ENCODE measurements at regions of chr11 and their contacts with region 1.

Region 1: GRCh38 chr11:86592659-86593451 is 79.6 kb downstream of the ME3 start:
- DNase-seq: peak; percentile 98
- H3K4me3 Mint-ChIP-seq: no peak overlapping the region
- H3K27ac Mint-ChIP-seq: peak overlapping the region; percentile 86
- H3K4me1 Mint-ChIP-seq: peaks cover 70% of the 10 kb centered on the region
- H3K27me3 Mint-ChIP-seq: no peaks in the 10 kb centered on the region

Region 2: DNA sequence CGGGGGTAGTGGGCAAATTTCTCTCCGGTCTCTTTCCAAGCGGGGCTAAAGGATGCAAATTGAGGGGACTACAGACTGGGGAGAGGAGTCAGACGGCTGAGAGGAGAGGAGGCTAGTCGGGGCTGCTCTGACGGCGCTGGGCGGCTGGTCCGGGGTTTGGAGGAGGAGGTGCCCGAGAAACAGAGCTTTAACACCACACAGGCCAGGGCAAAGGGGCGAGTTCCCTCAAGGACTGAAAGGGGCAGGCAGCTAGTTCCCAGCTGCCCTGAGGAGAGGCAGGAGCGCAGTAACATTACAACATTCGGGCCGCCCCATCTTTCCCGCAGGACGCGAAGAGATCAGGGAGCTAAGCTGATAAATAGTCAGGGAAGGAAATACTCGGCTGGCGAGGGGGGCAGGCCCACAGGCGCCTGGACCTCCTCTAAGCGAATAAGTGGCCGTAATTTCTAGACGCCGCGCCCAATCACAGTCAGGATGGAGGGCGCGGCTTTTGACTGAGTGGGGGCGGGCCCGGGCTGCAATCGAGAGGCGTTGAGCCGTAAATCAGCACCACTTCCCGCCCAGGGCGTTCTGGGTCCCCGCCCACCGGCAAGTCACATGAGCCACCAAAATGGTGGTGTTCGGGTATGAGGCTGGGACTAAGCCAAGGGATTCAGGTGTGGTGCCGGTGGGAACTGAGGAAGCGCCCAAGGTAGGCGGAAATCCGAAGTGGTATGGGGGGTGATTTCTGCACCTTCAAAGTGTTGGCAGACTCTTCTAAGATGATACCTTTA is 964.7 kb before region 1 on chr11 and contains the start of gene TMEM126B:
- CTCF ChIA-PET with region 1: no interaction called
- intact Hi-C with region 1: loop called (anchors 2 kb)
- DNase-seq: peak; percentile 98
- H3K4me3 Mint-ChIP-seq: peak within 1 kb of the TSS; percentile 99
- H3K27ac Mint-ChIP-seq: peak within 1 kb of the TSS; percentile 96
- H3K4me1 Mint-ChIP-seq: peaks cover 33% of the 10 kb centered on the region
- H3K27me3 Mint-ChIP-seq: no peaks in the 10 kb centered on the region
- total RNA-seq, gene TMEM126B: 72.6 to 79.0 TPM

Region 3: GRCh38 chr11:85947431-85948272 is 645.2 kb before region 1 on chr11:
- CTCF ChIA-PET with region 1: no interaction called
- intact Hi-C with region 1: loop called (anchors 1 kb)
- DNase-seq: peak; percentile 62
- H3K4me3 Mint-ChIP-seq: peak overlapping the region; percentile 1
- H3K27ac Mint-ChIP-seq: peak overlapping the region; percentile 87
- H3K4me1 Mint-ChIP-seq: peaks cover 46% of the 10 kb centered on the region
- H3K27me3 Mint-ChIP-seq: no peaks in the 10 kb centered on the region

Region 4: DNA sequence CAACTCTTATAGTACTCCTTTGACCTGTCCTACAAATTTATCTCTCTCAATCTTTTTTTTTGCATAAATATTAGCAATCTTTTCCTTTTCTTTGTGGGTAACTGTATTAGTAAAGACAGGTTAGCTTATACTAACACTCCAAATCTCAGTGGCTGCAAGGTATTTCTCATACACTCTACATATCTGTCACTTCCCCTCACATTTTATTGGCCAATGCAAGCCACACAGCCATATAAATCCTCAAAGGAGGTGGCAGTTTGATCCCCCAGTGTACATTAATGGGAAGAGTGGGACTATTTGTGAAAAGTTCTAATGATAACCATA is 390.9 kb before region 1 on chr11:
- CTCF ChIA-PET with region 1: no interaction called
- intact Hi-C with region 1: loop called (anchors 1 kb)
- DNase-seq: peak; percentile 42
- H3K4me3 Mint-ChIP-seq: no peak overlapping the region
- H3K27ac Mint-ChIP-seq: no peak overlapping the region
- H3K4me1 Mint-ChIP-seq: no peaks in the 10 kb centered on the region
- H3K27me3 Mint-ChIP-seq: no peaks in the 10 kb centered on the region

Region 5: GRCh38 chr11:86456052-86456939 is 136.6 kb before region 1 on chr11:
- CTCF ChIA-PET with region 1: interaction called, 4 read pairs
- intact Hi-C with region 1: loop called (anchors 1 kb)
- DNase-seq: peak; percentile 95
- H3K4me3 Mint-ChIP-seq: no peak overlapping the region
- H3K27ac Mint-ChIP-seq: no peak overlapping the region
- H3K4me1 Mint-ChIP-seq: peaks cover 8% of the 10 kb centered on the region
- H3K27me3 Mint-ChIP-seq: no peaks in the 10 kb centered on the region

Region 6: DNA sequence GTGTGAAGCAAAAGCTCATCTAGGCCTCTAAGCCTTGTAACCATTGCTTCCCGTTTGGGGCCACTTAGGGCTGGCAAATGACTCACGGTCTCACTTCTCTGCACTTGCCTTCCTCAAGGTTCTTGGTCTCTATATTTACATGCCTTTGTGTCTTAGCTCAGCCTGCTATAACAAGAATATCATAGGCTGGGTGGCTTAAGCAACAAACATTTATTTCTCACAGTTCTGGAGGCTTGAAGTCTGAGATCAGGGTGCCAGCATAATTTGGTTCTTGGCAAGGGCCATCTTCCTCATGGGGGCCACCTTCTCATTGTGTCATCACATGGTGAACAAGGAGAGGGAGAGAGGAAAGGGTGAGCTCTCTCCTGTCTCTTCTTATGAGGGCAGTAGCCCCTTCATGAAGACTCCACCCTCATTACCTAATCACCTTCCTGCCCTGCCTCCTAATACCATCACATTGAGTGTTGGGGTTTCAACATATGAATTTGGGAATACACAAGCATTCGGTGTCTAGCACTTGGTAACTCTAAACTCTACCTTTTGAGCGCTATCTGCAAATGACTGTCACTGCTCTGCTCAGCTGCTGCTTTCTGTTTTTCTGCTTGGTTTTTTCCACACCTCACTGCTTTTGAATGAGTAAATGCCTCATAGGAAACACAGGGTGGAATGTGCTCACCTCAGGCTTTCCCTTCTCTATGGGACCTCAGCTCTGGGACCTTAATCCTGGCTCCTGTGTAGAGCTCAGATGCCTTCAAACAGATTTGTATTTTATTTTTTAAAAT is 95.7 kb after region 1 on chr11:
- CTCF ChIA-PET with region 1: interaction called, 4 read pairs
- intact Hi-C with region 1: loop called (anchors 1 kb)
- DNase-seq: peak; percentile 70
- H3K4me3 Mint-ChIP-seq: no peak overlapping the region
- H3K27ac Mint-ChIP-seq: peak overlapping the region; percentile 90
- H3K4me1 Mint-ChIP-seq: peaks cover 27% of the 10 kb centered on the region
- H3K27me3 Mint-ChIP-seq: peaks cover 2% of the 10 kb centered on the region

Region 7: DNA sequence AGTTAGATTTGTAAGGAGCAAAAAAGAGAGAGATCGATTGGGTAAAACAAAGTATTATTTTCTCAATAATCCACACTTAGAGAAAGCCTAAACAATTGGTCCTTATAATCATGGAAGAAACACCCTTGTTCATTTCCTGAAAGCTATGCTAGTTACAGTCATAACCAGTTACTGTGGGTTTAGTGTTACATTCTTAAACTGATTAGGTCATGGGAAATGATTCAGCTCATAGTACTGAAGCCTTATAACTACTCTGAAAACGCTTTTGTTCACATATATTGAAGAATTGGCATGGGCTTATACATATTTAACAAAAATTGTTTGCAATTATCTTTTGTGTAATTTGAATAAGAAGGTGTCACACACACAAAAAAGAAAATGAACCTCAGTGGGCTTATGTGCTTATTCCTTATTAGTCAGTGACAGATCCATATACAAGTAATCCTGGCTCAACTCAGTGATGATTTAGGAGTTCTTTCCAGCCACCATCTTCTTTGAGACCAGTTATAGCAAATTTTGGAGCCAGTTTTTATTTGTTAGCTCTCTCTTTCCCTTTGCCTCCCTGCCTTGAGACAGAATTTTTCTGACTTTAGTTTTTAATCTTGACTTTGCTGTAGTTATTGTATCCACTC is 1943.2 kb after region 1 on chr11:
- CTCF ChIA-PET with region 1: no interaction called
- intact Hi-C with region 1: loop called (anchors 2 kb)
- DNase-seq: no peak
- H3K4me3 Mint-ChIP-seq: no peak overlapping the region
- H3K27ac Mint-ChIP-seq: peak overlapping the region; percentile 21
- H3K4me1 Mint-ChIP-seq: peaks cover 15% of the 10 kb centered on the region
- H3K27me3 Mint-ChIP-seq: peaks cover 9% of the 10 kb centered on the region